Activated CD4-positive, alpha-beta T cell treated with anti-CD3 and anti-CD28 coated beads for 36 hours (primary cell): ENCODE measurements at regions of chr5 and their contacts with region 1.

Region 1: GRCh38 chr5:175657593-175658271 is at the start of gene HRH2:
- DNase-seq: peak; percentile 76
- ATAC-seq: peak; percentile 46
- H3K4me3 Mint-ChIP-seq: peak within 1 kb of the TSS; percentile 93
- H3K27ac Mint-ChIP-seq: peak within 1 kb of the TSS; percentile 94
- H3K4me1 Mint-ChIP-seq: peaks cover 75% of the 10 kb centered on the region
- H3K27me3 Mint-ChIP-seq: no peaks in the 10 kb centered on the region
- total RNA-seq, gene HRH2: 12.3 to 16.9 TPM

Region 2: GRCh38 chr5:175452166-175452565 is 205.6 kb before region 1 on chr5:
- CTCF ChIA-PET with region 1: no interaction called
- POLR2A ChIA-PET with region 1: no interaction called
- intact Hi-C with region 1: no loop called
- DNase-seq: no peak
- ATAC-seq: no peak
- H3K4me3 Mint-ChIP-seq: no peak overlapping the region
- H3K27ac Mint-ChIP-seq: no peak overlapping the region
- H3K4me1 Mint-ChIP-seq: peaks cover 2% of the 10 kb centered on the region
- H3K27me3 Mint-ChIP-seq: peaks cover 39% of the 10 kb centered on the region

Region 3: DNA sequence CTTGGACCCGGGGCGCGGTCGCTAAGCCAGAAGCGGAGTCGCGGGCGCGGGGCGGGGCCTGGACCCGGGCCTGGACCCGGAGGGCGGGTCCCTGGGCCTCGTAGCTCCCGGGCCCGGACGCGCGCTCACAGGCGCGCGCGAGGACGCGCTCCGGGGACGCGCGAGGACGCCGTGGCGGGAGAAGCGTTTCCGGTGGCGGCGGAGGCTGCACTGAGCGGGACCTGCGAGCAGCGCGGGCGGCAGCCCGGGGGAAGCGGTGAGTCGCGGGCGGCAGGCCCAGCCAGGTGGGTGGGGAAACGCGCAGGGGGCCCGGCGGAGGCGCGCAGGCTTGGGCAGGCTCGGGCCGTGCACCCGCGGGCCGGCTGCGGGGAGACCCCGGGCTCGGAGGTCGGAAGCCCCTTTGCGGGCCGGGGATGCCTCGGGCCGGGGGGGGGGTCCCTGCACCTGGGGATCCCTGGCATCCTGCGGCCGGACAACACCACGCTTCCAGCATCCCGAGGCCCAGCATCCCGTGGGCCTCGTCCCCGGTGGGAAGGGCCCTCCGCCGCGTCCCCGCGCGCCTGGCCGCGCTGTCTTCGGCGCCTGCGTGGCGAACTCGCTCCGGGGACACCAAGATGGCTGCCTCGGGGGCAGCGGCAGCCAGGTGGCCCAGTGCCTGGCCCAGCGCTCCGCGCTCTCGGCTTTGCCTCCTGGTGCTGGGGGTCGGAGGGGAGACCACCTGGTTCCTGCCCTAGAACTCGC is 179.2 kb before region 1 on chr5 and contains the start of gene SFXN1:
- CTCF ChIA-PET with region 1: no interaction called
- POLR2A ChIA-PET with region 1: interaction called, 3 read pairs
- intact Hi-C with region 1: loop called (anchors 1 to 5 kb)
- DNase-seq: peak; percentile 90
- ATAC-seq: peak; percentile 79
- H3K4me3 Mint-ChIP-seq: peak within 1 kb of the TSS; percentile 97
- H3K27ac Mint-ChIP-seq: peak within 1 kb of the TSS; percentile 99
- H3K4me1 Mint-ChIP-seq: peaks cover 47% of the 10 kb centered on the region
- H3K27me3 Mint-ChIP-seq: peaks cover 3% of the 10 kb centered on the region
- total RNA-seq, gene SFXN1: 322 to 433 TPM

Region 4: GRCh38 chr5:175617447-175617846 is 40.3 kb before region 1 on chr5:
- CTCF ChIA-PET with region 1: interaction called, 3 read pairs
- POLR2A ChIA-PET with region 1: no interaction called
- intact Hi-C with region 1: loop called in 1 of 2 experiments (anchors 2 kb)
- DNase-seq: peak; percentile 22
- ATAC-seq: no peak
- H3K4me3 Mint-ChIP-seq: no peak overlapping the region
- H3K27ac Mint-ChIP-seq: no peak overlapping the region
- H3K4me1 Mint-ChIP-seq: peaks cover 19% of the 10 kb centered on the region
- H3K27me3 Mint-ChIP-seq: no peaks in the 10 kb centered on the region

Region 5: DNA sequence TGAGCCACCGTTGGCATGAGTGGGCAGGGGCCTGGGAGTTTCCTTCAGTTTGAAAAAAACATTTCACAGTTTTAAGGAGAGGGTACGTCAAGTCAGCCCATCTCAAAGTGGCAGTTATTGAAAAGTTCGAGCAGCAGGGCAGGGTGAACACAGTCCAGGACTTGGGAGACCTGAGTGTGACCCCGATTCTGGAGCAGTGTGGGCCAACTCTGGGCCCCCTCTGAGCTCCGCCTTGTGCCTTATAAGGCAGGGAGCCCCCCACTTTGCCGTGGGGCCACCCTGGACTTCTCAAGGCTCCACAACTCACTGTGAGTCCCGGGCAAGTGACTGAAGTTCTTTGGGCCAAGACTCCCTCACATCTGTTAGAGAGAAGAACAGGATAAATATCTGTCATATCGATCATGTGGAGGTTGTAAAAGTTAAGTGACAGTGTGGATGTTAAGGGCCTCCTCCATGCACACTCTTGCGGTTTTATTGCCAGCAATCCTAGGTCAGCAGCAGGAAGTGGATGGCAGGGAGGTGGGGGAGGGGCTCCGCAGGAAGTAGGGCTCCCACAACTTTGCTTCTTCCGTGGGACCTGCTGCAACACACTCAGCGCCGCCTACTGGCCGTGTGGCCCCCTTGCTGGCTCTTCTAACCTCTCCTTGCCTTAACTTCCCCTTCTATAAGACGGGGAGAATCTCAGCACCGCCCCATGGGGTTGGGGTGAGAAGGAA is 38.6 kb after region 1 on chr5:
- CTCF ChIA-PET with region 1: interaction called, 4 read pairs
- POLR2A ChIA-PET with region 1: no interaction called
- intact Hi-C with region 1: loop called (anchors 1 to 5 kb)
- DNase-seq: peak; percentile 94
- ATAC-seq: peak; percentile 90
- H3K4me3 Mint-ChIP-seq: peak overlapping the region; percentile 43
- H3K27ac Mint-ChIP-seq: peak overlapping the region; percentile 91
- H3K4me1 Mint-ChIP-seq: peaks cover 24% of the 10 kb centered on the region
- H3K27me3 Mint-ChIP-seq: no peaks in the 10 kb centered on the region

Region 6: DNA sequence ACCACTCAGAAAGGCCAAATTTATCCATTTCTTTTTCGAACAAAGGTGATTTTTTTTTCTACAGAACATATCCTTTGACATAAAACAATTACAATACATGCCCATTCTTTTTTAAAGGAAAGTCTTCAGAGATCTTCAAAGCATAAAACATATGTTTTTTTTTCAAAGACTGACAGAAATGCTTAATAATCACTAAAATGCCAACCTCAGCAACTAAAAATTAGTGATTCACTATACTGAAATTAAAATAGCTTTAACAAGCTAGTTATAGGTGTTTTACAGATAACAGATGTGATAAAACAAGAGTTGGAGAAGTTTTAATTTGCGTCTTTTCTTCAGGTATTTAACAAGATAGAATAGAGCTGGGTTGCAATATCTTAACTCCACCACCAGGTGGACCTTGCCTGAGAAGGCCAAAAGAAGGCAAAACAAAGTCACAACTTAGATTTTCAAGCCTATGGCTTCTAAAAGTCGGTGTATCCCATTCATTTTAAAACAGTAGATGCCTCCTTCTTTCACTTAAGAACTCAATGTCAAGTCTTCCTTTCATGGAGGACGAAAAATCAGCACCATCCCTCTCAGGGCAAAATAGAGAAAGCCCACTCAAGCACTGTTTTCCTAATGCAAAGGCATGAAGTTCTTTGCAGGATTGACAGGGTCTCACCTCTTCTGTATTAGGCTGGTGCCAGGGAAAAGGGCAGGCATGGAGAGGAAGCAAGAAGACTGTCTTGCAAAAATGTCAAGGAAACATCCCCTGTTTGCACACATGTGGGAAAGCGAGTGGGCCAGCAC is 182.5 kb after region 1 on chr5:
- CTCF ChIA-PET with region 1: no interaction called
- POLR2A ChIA-PET with region 1: no interaction called
- intact Hi-C with region 1: no loop called
- DNase-seq: no peak
- ATAC-seq: no peak
- H3K4me3 Mint-ChIP-seq: no peak overlapping the region
- H3K27ac Mint-ChIP-seq: no peak overlapping the region
- H3K4me1 Mint-ChIP-seq: no peaks in the 10 kb centered on the region
- H3K27me3 Mint-ChIP-seq: no peaks in the 10 kb centered on the region